Activated CD4-positive, alpha-beta memory T cell treated with anti-CD3 and anti-CD28 coated beads for 36 hours (primary cell): ENCODE measurements at regions of chr4 and their contacts with region 1.

Region 1: GRCh38 chr4:102868781-102869568 is at the start of gene CISD2:
- DNase-seq: peak; percentile 95
- H3K4me3 Mint-ChIP-seq: peak within 1 kb of the TSS; percentile 98
- H3K27ac Mint-ChIP-seq: peak within 1 kb of the TSS; percentile 98
- H3K4me1 Mint-ChIP-seq: peaks cover 54% of the 10 kb centered on the region
- H3K27me3 Mint-ChIP-seq: no peaks in the 10 kb centered on the region
- total RNA-seq, gene CISD2: 28.5 to 32.8 TPM

Region 2: GRCh38 chr4:102627831-102628523 is 241.0 kb before region 1 on chr4:
- CTCF ChIA-PET with region 1: no interaction called
- POLR2A ChIA-PET with region 1: no interaction called
- intact Hi-C with region 1: loop called (anchors 2 kb)
- DNase-seq: peak; percentile 37
- H3K4me3 Mint-ChIP-seq: no peak overlapping the region
- H3K27ac Mint-ChIP-seq: peak overlapping the region; percentile 69
- H3K4me1 Mint-ChIP-seq: peaks cover 67% of the 10 kb centered on the region
- H3K27me3 Mint-ChIP-seq: no peaks in the 10 kb centered on the region

Region 3: GRCh38 chr4:102696758-102697157 is 172.2 kb before region 1 on chr4:
- CTCF ChIA-PET with region 1: no interaction called
- POLR2A ChIA-PET with region 1: no interaction called
- intact Hi-C with region 1: no loop called
- DNase-seq: no peak
- H3K4me3 Mint-ChIP-seq: no peak overlapping the region
- H3K27ac Mint-ChIP-seq: no peak overlapping the region
- H3K4me1 Mint-ChIP-seq: no peaks in the 10 kb centered on the region
- H3K27me3 Mint-ChIP-seq: no peaks in the 10 kb centered on the region

Region 4: DNA sequence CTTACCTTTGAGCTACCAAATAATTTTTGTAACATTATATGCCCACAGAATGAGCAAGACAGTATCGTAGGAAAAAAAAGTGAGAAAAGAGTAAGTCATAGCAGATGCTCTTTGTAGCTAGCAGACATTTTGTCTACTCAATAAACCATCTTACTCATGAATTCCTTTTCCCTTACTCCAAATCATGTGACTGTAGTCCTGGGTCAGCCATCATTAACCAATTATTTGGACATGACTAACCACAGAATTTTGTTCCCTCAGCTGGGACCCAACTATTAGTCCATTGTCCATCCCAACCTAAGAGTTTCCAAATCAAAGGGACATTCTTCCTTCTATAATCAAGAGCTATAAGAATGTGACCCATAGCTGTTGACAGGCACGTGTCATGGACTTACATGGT is 53.0 kb before region 1 on chr4:
- CTCF ChIA-PET with region 1: interaction called, 5 read pairs
- POLR2A ChIA-PET with region 1: interaction called, 19 read pairs
- intact Hi-C with region 1: no loop called
- DNase-seq: no peak
- H3K4me3 Mint-ChIP-seq: no peak overlapping the region
- H3K27ac Mint-ChIP-seq: peak overlapping the region; percentile 82
- H3K4me1 Mint-ChIP-seq: peaks cover 86% of the 10 kb centered on the region
- H3K27me3 Mint-ChIP-seq: no peaks in the 10 kb centered on the region

Region 5: DNA sequence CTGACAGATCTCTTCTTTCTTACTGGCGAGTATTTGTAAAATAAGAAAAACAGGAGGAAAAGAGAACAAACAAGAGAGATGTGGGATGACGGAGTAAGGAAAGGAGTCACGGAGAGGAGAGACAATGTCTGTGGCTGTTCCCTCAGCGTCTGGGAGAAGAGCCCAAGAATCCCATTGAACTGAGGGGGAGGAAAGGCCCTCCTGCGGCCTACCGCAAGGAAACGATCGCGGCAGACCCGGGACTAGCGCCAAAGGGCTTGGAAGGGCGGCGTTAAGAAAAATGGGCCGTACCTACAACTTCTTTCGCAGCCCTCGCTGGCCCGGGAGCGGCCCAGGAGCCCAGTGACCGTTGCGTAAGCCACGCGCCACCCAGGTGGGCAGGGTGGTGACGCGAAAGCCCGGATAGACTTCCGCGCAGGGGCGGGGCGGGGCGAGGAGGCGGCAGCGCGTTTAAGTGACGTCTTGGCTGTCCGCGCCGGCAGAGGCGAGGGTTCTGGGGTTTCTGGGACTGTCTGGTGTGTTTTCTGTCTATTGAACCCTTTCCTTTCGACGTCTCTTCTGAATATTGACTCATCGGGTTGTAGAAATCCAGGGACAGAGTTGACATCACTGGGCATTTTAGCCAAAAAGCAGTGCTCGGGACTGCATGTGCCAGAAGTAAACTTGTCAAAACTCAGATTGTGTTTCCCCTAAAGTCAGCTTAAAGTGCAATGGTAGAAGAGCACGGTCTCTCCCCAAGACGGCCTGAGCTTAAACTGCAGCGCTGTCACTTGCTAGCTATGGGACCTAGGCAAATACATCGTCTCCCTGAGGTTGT is 150.5 kb after region 1 on chr4 and contains the start of gene SLC9B1:
- CTCF ChIA-PET with region 1: no interaction called
- POLR2A ChIA-PET with region 1: no interaction called
- intact Hi-C with region 1: loop called (anchors 1 kb)
- DNase-seq: peak; percentile 97
- H3K4me3 Mint-ChIP-seq: peak within 1 kb of the TSS; percentile 84
- H3K27ac Mint-ChIP-seq: peak within 1 kb of the TSS; percentile 92
- H3K4me1 Mint-ChIP-seq: peaks cover 15% of the 10 kb centered on the region
- H3K27me3 Mint-ChIP-seq: no peaks in the 10 kb centered on the region
- total RNA-seq, gene SLC9B1: 1.9 to 2.4 TPM

Region 6: GRCh38 chr4:103036169-103036568 is 167.2 kb after region 1 on chr4:
- CTCF ChIA-PET with region 1: no interaction called
- POLR2A ChIA-PET with region 1: no interaction called
- intact Hi-C with region 1: no loop called
- DNase-seq: no peak
- H3K4me3 Mint-ChIP-seq: no peak overlapping the region
- H3K27ac Mint-ChIP-seq: no peak overlapping the region
- H3K4me1 Mint-ChIP-seq: no peaks in the 10 kb centered on the region
- H3K27me3 Mint-ChIP-seq: no peaks in the 10 kb centered on the region